Caki2 (cell line): ENCODE measurements at regions of chr2 and their contacts with region 1.

Region 1: DNA sequence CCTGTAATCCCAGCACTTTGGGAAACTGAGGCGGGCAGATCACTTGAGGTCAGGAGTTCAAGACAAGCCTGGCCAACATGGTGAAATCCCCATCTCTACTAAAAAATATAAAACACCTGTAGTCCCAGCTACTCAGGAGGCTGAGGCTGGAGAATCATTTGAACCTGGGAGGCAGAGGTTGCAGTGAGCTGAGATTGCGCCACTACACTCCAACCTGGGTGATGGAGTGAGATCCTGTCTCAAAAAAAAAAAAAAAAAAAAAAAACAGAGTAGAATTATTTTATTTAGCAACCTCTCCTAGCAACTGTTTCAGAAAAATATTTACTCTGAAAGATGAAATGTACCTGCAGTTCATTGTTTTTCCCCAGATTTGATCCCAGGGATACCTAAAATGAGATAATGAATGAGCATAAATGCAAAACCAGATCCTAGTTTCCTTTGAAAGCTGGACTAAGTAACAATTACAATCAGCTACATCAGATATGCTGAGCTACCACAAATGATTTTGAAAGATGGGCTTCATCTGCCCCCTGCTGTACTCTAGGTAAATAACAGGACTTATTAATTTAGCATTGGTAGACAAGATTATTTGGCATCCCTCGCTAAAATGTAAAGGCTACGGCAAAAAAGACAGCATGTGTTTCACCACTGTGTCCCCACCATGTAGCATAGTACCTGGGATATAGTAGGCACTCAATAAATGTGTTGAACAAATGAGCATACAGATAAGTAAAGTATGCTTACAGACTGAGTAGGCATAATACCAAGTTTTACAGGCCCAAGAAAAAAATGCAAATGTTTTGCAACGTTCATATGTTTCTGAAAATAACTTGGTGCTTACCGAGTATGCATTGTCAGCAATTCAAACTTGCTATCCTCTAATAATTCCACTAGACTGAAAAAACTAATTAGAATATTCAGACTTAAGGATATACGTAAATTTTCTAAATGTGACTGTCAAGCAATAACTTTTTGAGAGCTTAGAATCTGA is 102.5 kb downstream of the ATL2 start:
- DNase-seq: peak; percentile 68

Region 2: DNA sequence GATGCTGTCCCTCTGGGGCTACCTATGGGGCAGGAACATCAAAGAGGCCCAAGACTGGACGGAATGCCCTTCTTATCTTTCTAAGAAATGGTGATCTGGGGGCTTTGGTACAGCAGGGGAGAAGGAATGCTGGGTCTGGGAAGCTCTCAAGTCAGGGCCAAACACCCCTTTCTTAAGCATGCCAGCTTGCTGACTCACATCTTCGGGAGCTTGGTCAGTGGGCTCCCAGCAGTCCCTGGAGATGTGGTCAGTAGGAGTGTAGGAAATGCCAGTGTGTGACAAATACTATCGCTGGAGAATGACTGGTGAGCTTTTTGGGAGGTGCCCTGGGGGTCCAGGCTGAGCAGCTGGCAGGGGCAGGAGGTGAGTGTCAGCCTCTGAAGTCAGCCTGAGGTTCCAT is 498.1 kb before region 1 on chr2:
- in situ Hi-C with region 1: no loop called
- DNase-seq: no peak

Region 3: DNA sequence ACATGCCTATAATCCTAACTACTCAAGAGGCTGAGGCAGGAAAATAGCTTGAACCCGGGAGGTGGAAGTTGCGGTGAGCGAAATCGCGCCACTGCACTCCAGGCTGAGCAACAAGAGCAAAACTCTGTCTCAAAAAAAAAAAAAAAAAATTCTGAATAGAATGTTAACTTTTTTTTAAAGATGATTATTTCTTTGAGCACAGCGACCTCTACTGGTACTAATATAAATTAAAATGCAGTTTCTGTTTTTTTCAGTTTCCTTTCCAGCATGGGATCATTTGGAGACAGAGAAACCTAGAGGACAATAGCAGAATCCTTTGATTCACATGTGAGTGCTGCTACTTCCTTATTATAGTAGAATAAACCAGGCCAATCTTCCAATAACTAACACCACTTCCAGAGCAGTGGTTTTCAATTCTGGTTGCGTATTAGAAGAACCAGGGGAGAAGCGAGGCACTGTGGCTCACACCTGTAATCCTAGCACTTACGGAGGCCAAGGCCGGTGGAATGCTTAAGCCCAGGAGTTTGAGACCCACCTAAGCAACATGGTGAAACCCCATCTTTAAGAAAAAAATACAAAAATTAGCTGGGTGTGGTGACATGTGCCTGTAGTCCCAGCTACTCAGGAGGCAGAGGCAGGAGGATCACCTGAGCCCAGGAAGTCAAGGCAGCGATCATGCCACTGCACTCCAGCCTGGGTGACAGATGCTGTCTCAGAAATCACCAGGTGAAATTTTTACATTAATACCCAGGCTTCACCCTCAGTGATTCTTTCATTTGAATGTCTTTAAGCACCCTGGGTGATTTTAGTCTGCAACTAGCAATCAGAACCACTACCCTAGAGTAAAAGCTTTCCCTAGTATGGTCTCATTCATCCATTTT is 466.5 kb after region 1 on chr2:
- in situ Hi-C with region 1: loop called (anchors 25 kb)
- DNase-seq: peak; percentile 65